GM12878 (cell line): ENCODE measurements at regions of chr10 and their contacts with region 1.

Region 1: GRCh38 chr10:31318854-31319601 is at the start of gene ZEB1:
- DNase-seq: no peak
- ATAC-seq: peak; percentile 52
- H3K4me3 ChIP-seq: peak within 1 kb of the TSS; percentile 84
- H3K27ac ChIP-seq: peak within 1 kb of the TSS; percentile 100
- H3K4me1 ChIP-seq: peaks cover 7% of the 10 kb centered on the region
- H3K27me3 ChIP-seq: no peaks in the 10 kb centered on the region
- CTCF ChIP-seq: peak; percentile 29 to 53 (median 31); a peak in 4 of 6 replicates
- EP300 ChIP-seq: peak in 1 of 2 experiments; percentile 41; a peak in 1 of 4 replicates
- POLR2A ChIP-seq: peak; percentile 78
- RAD21 ChIP-seq: 0 out of 2 replicates have a peak, but pooled peaks have one; percentile 8
- polyA plus RNA-seq, gene ZEB1: 10.4 to 16.8 TPM

Region 2: GRCh38 chr10:30736685-30737232 is 582.3 kb before region 1 on chr10:
- CTCF ChIA-PET with region 1: no interaction called
- POLR2A ChIA-PET with region 1: no interaction called
- RAD21 ChIA-PET with region 1: no interaction called
- SMC1A ChIA-PET with region 1: no interaction called
- in situ Hi-C with region 1: no loop called
- intact Hi-C with region 1: loop called (anchors 5 kb)
- DNase-seq: peak; percentile 94
- ATAC-seq: peak; percentile 85
- H3K4me3 ChIP-seq: no peak overlapping the region
- H3K27ac ChIP-seq: peak overlapping the region; percentile 91
- H3K4me1 ChIP-seq: peaks cover 25% of the 10 kb centered on the region
- H3K27me3 ChIP-seq: no peaks in the 10 kb centered on the region
- CTCF ChIP-seq: no peak
- EP300 ChIP-seq: peak; percentile 88 to 95
- POLR2A ChIP-seq: no peak
- RAD21 ChIP-seq: no peak

Region 3: DNA sequence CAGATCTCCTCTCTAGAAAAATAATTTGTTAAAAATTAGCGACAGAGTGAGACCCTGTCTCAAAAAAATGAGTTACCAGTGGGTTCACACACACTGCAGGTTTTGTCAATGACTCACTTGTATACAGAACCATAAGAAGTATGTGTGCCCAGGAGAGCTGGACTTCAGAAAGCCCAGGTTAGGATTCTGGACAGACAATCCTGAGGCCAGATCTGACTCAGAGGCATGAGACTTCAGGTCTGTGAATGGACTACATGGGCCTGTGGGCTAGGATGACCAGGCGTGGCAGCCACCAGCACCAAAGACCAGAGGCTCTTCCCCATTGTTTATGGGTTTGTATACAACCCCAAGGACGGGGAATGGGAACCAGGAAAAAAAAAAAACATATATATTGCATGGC is 278.0 kb before region 1 on chr10:
- CTCF ChIA-PET with region 1: no interaction called
- POLR2A ChIA-PET with region 1: no interaction called
- RAD21 ChIA-PET with region 1: no interaction called
- SMC1A ChIA-PET with region 1: no interaction called
- in situ Hi-C with region 1: no loop called
- intact Hi-C with region 1: no loop called
- DNase-seq: no peak
- ATAC-seq: no peak
- H3K4me3 ChIP-seq: no peak overlapping the region
- H3K27ac ChIP-seq: no peak overlapping the region
- H3K4me1 ChIP-seq: no peaks in the 10 kb centered on the region
- H3K27me3 ChIP-seq: no peaks in the 10 kb centered on the region
- CTCF ChIP-seq: no peak
- EP300 ChIP-seq: no peak
- POLR2A ChIP-seq: no peak
- RAD21 ChIP-seq: no peak

Region 4: GRCh38 chr10:31101123-31101522 is 217.9 kb before region 1 on chr10:
- CTCF ChIA-PET with region 1: interaction called, 4 read pairs
- POLR2A ChIA-PET with region 1: no interaction called
- RAD21 ChIA-PET with region 1: interaction called, 3 read pairs
- SMC1A ChIA-PET with region 1: interaction called, 4 read pairs
- in situ Hi-C with region 1: no loop called
- intact Hi-C with region 1: loop called (anchors 5 kb)
- DNase-seq: peak; percentile 59
- ATAC-seq: peak; percentile 91
- H3K4me3 ChIP-seq: no peak overlapping the region
- H3K27ac ChIP-seq: no peak overlapping the region; the same call in 1 of the 2 replicates
- H3K4me1 ChIP-seq: peaks cover 14% of the 10 kb centered on the region
- H3K27me3 ChIP-seq: no peaks in the 10 kb centered on the region
- CTCF ChIP-seq: no peak
- EP300 ChIP-seq: peak; percentile 52 to 80; a peak in 3 of 4 replicates
- POLR2A ChIP-seq: no peak
- RAD21 ChIP-seq: no peak

Region 5: GRCh38 chr10:31345886-31346285 is 26.9 kb after region 1 on chr10:
- CTCF ChIA-PET with region 1: interaction called, 5 read pairs
- POLR2A ChIA-PET with region 1: no interaction called
- RAD21 ChIA-PET with region 1: interaction called, 10 read pairs
- SMC1A ChIA-PET with region 1: interaction called, 21 read pairs
- in situ Hi-C with region 1: no loop called
- intact Hi-C with region 1: no loop called
- DNase-seq: no peak
- ATAC-seq: no peak
- H3K4me3 ChIP-seq: no peak overlapping the region
- H3K27ac ChIP-seq: no peak overlapping the region
- H3K4me1 ChIP-seq: peaks cover 45% of the 10 kb centered on the region
- H3K27me3 ChIP-seq: no peaks in the 10 kb centered on the region
- CTCF ChIP-seq: no peak
- EP300 ChIP-seq: no peak
- POLR2A ChIP-seq: no peak
- RAD21 ChIP-seq: no peak

Region 6: GRCh38 chr10:31437959-31438358 is 118.9 kb after region 1 on chr10:
- CTCF ChIA-PET with region 1: no interaction called
- POLR2A ChIA-PET with region 1: no interaction called
- RAD21 ChIA-PET with region 1: no interaction called
- SMC1A ChIA-PET with region 1: no interaction called
- in situ Hi-C with region 1: no loop called
- intact Hi-C with region 1: no loop called
- DNase-seq: no peak
- ATAC-seq: no peak
- H3K4me3 ChIP-seq: no peak overlapping the region
- H3K27ac ChIP-seq: no peak overlapping the region
- H3K4me1 ChIP-seq: no peaks in the 10 kb centered on the region
- H3K27me3 ChIP-seq: no peaks in the 10 kb centered on the region
- CTCF ChIP-seq: no peak
- EP300 ChIP-seq: no peak
- POLR2A ChIP-seq: no peak
- RAD21 ChIP-seq: no peak

Region 7: DNA sequence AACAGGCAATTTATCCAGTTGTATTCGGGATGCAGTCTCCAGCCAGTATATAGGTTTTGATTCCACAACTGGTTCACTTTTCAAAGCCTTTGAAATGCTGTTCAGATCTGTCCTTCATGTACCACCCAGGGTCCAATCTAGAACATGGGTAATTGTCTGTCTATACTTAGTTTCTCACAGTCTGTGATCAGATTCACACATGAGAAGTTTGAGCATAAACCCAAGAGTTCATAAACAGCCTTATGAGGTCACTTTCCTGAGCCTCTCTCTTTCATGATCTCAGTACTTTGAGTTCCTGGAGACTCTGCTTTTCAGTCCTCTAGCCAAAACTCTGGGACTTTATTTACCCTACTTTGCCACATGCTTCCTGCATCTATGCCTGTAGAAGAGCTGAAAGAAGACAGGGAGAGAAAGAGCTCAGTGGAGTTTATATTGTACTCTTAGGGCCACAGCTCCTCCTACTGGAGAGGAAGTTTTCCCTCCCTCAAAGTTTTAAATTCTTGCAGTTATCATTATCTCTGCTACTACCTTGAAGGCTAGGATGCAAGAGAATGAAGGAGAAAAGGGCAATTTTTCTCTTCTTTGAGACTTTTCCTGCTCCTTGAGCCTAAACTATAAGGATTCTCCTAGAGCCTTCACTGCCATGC is 172.0 kb after region 1 on chr10:
- CTCF ChIA-PET with region 1: no interaction called
- POLR2A ChIA-PET with region 1: no interaction called
- RAD21 ChIA-PET with region 1: interaction called, 4 read pairs
- SMC1A ChIA-PET with region 1: interaction called, 3 read pairs
- in situ Hi-C with region 1: no loop called
- intact Hi-C with region 1: loop called (anchors 1 kb)
- DNase-seq: peak; percentile 28
- ATAC-seq: peak; percentile 83
- H3K4me3 ChIP-seq: no peak overlapping the region
- H3K27ac ChIP-seq: no peak overlapping the region
- H3K4me1 ChIP-seq: no peaks in the 10 kb centered on the region
- H3K27me3 ChIP-seq: no peaks in the 10 kb centered on the region
- CTCF ChIP-seq: peak; percentile 53 to 60 (median 53)
- EP300 ChIP-seq: no peak
- POLR2A ChIP-seq: no peak
- RAD21 ChIP-seq: peak; percentile 65